Heart left ventricle (tissue), 16 donors: ENCODE measurements at regions of chr1 and their contacts with region 1.

Region 1: GRCh38 chr1:232558954-232559353 is 71.0 kb downstream of the SIPA1L2 start:
- DNase-seq: no peak
- ATAC-seq: no peak
- H3K4me3 ChIP-seq: no peak overlapping the region
- H3K27ac ChIP-seq: peak overlapping the region in 1 of 12 donors; percentile 5
- H3K4me1 ChIP-seq: peaks cover 6 to 95% (median 57%) of the 10 kb centered on the region in 12 donors
- H3K27me3 ChIP-seq: no peaks in the 10 kb centered on the region
- CTCF ChIP-seq: no peak
- POLR2A ChIP-seq: no peak

Region 2: GRCh38 chr1:232226197-232226712 is 332.7 kb before region 1 on chr1:
- intact Hi-C with region 1: no loop called
- DNase-seq: no peak
- ATAC-seq: no peak
- H3K4me3 ChIP-seq: no peak overlapping the region
- H3K27ac ChIP-seq: no peak overlapping the region
- H3K4me1 ChIP-seq: peaks cover 0 to 8% (median 3%) of the 10 kb centered on the region in 12 donors
- H3K27me3 ChIP-seq: no peaks in the 10 kb centered on the region
- CTCF ChIP-seq: no peak
- POLR2A ChIP-seq: no peak

Region 3: DNA sequence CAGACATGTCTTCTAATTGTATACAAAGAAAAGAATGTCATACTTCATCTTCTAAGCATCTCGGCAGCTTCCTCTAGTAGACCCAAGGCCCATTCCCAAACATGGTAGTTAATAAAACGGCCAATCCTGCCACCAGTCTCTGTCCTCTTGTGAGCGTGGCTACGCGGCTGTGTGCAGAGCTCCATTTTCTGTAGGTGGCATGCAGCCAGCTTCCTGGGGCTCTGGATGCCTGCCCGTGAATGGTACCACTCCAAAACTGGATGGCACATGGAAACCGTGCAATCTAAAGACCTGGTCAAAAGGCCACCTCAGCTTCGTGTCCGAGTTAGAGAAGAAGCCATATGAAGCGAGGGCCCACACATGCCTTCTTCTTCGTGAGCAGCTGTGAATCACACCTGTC is 39.8 kb before region 1 on chr1:
- intact Hi-C with region 1: loop called in 2 of 10 experiments (anchors 5 kb)
- DNase-seq: peak; percentile 48 to 66 (median 64)
- ATAC-seq: peak; percentile 82 to 88 (median 84)
- H3K4me3 ChIP-seq: no peak overlapping the region
- H3K27ac ChIP-seq: no peak overlapping the region
- H3K4me1 ChIP-seq: peaks cover 0 to 40% (median 12%) of the 10 kb centered on the region in 12 donors
- H3K27me3 ChIP-seq: no peaks in the 10 kb centered on the region
- CTCF ChIP-seq: no peak
- POLR2A ChIP-seq: no peak

Region 4: GRCh38 chr1:232766241-232766890 is 207.4 kb after region 1 on chr1:
- intact Hi-C with region 1: no loop called
- DNase-seq: no peak
- ATAC-seq: no peak
- H3K4me3 ChIP-seq: no peak overlapping the region
- H3K27ac ChIP-seq: peak overlapping the region in 1 of 12 donors; percentile 74
- H3K4me1 ChIP-seq: peaks cover 0 to 15% (median 0%) of the 10 kb centered on the region in 12 donors
- H3K27me3 ChIP-seq: no peaks in the 10 kb centered on the region
- CTCF ChIP-seq: no peak
- POLR2A ChIP-seq: no peak